Activated CD8-positive, alpha-beta T cell treated with anti-CD3 and anti-CD28 coated beads, Interleukin-2, amount 10 ng/mL, durations not matched to agents 7 days and 5 days (primary cell): ENCODE measurements at regions of chr7 and their contacts with region 1.

Region 1: DNA sequence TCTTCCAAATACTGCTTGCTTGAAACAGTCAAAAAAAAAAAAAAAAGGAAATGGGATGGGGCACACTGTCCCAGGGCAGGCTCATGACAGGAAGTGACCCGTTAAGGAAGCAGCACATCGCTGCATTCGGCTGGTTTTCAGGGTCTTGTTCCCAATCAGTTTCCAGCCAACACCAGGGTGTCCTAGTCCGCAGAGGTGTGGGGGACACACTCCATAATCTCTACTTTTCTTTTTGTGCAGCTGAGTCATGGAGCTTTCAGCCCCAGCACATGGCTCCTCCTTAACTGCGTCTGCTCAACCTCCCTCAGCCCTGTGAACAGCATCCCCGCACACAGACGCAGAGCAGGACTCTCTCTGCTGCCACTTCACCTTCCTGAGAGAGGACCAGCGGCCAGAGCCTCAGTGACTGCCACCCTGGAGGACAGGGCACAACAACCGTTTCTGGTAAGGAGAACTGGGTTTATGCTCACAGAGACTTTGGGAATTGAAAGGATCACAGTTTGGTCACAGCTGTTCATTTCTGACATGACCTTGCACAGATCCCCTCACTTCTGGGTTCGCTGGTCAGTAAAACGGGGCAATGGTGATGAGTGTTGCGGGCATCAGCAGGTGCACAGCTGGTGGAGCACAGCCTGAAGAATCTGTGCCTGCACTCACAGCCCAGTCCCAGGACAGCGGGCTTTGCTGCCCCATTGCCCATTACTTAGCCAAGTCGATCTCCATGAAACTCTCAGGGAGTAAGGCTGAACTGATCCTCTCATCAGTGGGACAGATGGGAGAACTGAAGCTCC is at the start of gene GIMAP5:
- DNase-seq: peak; percentile 68
- ATAC-seq: peak; percentile 78
- H3K4me3 Mint-ChIP-seq: peak within 1 kb of the TSS; percentile 90
- H3K27ac Mint-ChIP-seq: peak within 1 kb of the TSS; percentile 89
- H3K4me1 Mint-ChIP-seq: peaks cover 79% of the 10 kb centered on the region
- H3K27me3 Mint-ChIP-seq: no peaks in the 10 kb centered on the region
- total RNA-seq, gene GIMAP5: 56.3 to 63.3 TPM

Region 2: DNA sequence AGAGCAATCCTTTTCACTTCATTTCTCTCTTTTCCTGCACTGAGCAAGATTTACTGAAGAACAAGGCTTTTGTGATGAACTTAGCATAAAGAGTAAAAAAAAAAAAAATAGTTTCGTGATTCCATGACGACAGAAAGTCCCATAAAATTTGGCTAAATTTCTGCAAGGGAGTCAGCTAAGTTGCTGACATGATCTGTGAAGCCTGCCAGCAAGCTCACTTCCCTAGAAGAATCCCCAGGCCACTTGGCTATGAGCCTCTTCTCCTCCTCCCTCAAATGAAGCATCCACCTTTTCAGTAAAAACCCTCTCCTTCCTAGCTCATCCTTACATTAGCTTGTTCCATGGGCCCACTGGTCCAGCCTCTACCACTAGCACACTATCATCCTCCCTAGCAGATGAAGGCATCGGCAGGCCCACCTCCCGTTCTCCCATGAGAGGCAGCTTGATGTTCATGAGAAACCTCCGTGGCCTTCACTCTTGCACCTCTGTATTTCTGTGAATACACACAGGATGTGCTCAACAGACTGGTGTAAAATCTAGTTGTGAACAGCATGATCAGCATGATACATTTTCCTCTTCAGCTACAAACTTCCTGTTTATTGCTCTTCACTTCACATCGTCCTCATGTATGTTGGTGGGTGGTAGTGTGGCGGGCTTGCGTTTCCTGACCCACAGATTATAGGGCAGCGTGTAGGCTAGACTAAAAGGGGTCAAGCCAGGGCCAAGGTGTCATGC is 256.1 kb before region 1 on chr7:
- CTCF ChIA-PET with region 1: no interaction called
- POLR2A ChIA-PET with region 1: interaction called, 11 read pairs
- DNase-seq: peak; percentile 78
- ATAC-seq: peak; percentile 70
- H3K4me3 Mint-ChIP-seq: peak overlapping the region; percentile 75
- H3K27ac Mint-ChIP-seq: peak overlapping the region; percentile 99
- H3K4me1 Mint-ChIP-seq: peaks cover 87% of the 10 kb centered on the region
- H3K27me3 Mint-ChIP-seq: no peaks in the 10 kb centered on the region

Region 3: DNA sequence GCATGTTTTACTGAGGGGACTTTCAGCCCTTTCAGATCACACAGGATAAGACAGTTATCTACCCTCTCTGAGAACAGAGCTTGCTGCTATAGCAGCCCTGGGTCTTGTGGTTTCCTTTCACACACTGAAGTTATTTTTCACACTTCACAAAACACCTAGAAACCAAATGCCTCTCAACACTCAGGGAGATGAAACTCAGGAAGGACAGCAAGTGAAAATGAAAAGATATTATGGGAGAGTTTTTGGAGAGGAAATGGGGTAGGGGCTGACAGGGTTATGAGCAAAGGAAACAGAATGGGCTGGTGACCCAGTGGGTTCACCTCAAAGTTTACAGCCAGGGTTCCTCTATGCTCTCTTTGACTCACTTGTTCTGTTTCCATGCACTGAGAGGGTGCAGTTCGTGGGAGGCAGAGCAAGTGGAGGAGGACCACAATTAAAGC is 69.0 kb before region 1 on chr7:
- CTCF ChIA-PET with region 1: interaction called, 3 read pairs
- POLR2A ChIA-PET with region 1: interaction called, 23 read pairs
- DNase-seq: peak; percentile 80
- ATAC-seq: peak; percentile 81
- H3K4me3 Mint-ChIP-seq: peak overlapping the region; percentile 32
- H3K27ac Mint-ChIP-seq: peak overlapping the region; percentile 87
- H3K4me1 Mint-ChIP-seq: peaks cover 90% of the 10 kb centered on the region
- H3K27me3 Mint-ChIP-seq: no peaks in the 10 kb centered on the region

Region 4: GRCh38 chr7:150716368-150716767 is 21.1 kb before region 1 on chr7 and contains the start of gene GIMAP1:
- CTCF ChIA-PET with region 1: interaction called, 21 read pairs
- POLR2A ChIA-PET with region 1: interaction called, 43 read pairs
- DNase-seq: peak; percentile 71
- ATAC-seq: peak; percentile 85
- H3K4me3 Mint-ChIP-seq: peak within 1 kb of the TSS; percentile 97
- H3K27ac Mint-ChIP-seq: peak within 1 kb of the TSS; percentile 87
- H3K4me1 Mint-ChIP-seq: peaks cover 51% of the 10 kb centered on the region
- H3K27me3 Mint-ChIP-seq: no peaks in the 10 kb centered on the region
- total RNA-seq, gene GIMAP1: 19.0 to 20.2 TPM

Region 5: GRCh38 chr7:150753826-150754603 is 16.6 kb after region 1 on chr7:
- CTCF ChIA-PET with region 1: interaction called, 47 read pairs
- POLR2A ChIA-PET with region 1: interaction called, 28 read pairs
- DNase-seq: peak; percentile 50
- ATAC-seq: peak; percentile 21
- H3K4me3 Mint-ChIP-seq: peak overlapping the region; percentile 40
- H3K27ac Mint-ChIP-seq: peak overlapping the region; percentile 86
- H3K4me1 Mint-ChIP-seq: peaks cover 70% of the 10 kb centered on the region
- H3K27me3 Mint-ChIP-seq: no peaks in the 10 kb centered on the region

Region 6: DNA sequence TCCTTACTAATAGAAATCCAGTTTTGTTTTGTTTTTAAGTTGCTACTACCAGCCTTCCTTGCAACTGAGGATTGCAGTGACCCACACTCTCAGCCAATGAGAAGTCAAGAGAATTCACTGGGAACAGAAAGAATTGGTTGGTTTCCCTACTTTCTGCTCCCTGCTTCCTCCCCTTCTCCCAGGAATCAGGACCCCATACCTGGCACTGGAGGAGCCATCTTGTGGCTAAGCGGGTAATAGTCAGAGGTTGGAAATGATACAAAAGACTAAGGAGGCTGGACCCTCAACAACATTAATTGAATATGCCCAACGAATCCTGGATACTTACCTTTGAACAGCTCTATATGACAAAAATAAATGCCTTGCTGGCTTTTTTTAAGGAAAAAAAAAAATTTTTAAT is 69.4 kb after region 1 on chr7:
- CTCF ChIA-PET with region 1: no interaction called
- POLR2A ChIA-PET with region 1: no interaction called
- DNase-seq: no peak
- ATAC-seq: no peak
- H3K4me3 Mint-ChIP-seq: no peak overlapping the region
- H3K27ac Mint-ChIP-seq: no peak overlapping the region
- H3K4me1 Mint-ChIP-seq: no peaks in the 10 kb centered on the region
- H3K27me3 Mint-ChIP-seq: peaks cover 42% of the 10 kb centered on the region